WTC11 (cell line): ENCODE measurements at regions of chr1 and their contacts with region 1.

Region 1: DNA sequence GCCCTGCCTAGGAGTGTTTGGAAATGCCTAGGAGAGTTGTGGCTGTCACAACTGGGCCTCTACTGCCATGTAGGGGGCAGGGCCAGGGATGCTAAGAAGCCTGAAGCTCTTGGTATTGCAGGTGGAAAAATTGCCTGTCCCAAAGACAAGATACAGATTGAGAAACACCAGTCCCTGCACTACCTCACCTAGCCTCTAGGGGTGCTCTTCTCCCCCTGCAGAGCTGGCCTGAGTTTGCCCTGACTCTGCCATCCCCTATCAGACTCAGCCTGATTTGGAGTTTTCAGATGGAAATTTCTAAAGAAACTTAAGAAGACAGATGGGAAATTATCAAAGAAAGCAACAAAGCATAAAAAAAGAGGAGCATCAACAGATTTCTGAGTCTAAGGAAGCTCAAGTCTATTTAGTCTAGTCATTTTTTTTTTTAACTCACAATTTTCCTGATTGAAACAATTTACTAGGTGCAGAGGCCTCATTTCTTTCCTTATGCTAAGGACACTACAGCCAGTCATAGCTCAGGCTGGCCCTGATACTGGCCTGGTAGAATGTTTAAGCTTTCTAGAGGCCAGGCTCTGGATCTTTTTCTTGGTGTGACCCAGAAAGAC is 61.4 kb upstream of the LRRN2 start:
- DNase-seq: peak; percentile 68
- ATAC-seq: peak; percentile 87
- H3K4me3 Mint-ChIP-seq: no peak overlapping the region
- H3K27ac Mint-ChIP-seq: no peak overlapping the region
- H3K4me1 Mint-ChIP-seq: peaks cover 29% of the 10 kb centered on the region
- H3K27me3 Mint-ChIP-seq: peaks cover 12% of the 10 kb centered on the region; the same call in 1 of the 2 replicates
- CTCF ChIP-seq: peak; percentile 99

Region 2: GRCh38 chr1:204565617-204566582 is 181.0 kb before region 1 on chr1:
- CTCF ChIA-PET with region 1: interaction called, 18 read pairs
- POLR2A ChIA-PET with region 1: interaction called, 3 read pairs
- DNase-seq: peak; percentile 40
- ATAC-seq: peak; percentile 85
- H3K4me3 Mint-ChIP-seq: peak overlapping the region; percentile 53
- H3K27ac Mint-ChIP-seq: peak overlapping the region; percentile 71
- H3K4me1 Mint-ChIP-seq: peaks cover 54% of the 10 kb centered on the region
- H3K27me3 Mint-ChIP-seq: peaks cover 6% of the 10 kb centered on the region
- CTCF ChIP-seq: peak; percentile 68

Region 3: DNA sequence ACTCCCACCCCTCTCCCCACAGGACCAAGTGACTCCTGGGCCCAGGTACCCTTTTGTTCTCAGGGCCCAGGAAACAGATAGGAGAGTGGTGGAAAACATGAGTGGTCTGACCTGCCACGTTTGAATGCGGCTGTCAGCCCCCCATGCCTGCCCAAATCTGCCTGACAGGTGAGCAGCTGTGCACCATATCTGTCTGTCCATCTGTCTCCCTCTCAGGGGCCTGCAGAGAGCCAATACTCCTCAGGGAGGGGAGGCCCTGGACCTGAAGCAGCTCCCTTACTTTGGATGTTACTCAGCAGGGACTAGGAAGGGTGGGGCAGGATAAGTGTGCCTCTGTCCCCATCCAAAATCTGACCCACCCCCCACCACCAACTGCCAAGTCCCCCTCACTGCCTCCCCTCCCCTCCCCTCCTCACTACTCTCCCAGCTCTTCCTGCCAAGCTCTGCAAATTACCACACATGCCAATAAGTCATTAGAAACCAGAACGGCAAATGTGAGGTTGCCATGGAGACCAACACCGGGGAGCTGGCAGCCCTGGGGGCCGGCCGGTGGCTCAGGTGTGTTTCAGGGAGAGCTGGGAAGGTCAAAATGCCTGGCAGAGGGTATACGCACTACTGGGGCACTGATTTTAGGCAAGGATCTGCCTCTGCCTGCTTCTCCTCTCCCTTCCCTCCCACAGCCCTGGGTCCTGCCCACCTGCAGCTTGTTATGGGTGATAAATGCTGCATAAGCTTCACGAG is 72.9 kb before region 1 on chr1:
- CTCF ChIA-PET with region 1: interaction called, 15 read pairs
- POLR2A ChIA-PET with region 1: no interaction called
- DNase-seq: peak; percentile 37
- ATAC-seq: peak; percentile 50
- H3K4me3 Mint-ChIP-seq: no peak overlapping the region
- H3K27ac Mint-ChIP-seq: no peak overlapping the region
- H3K4me1 Mint-ChIP-seq: peaks cover 8% of the 10 kb centered on the region
- H3K27me3 Mint-ChIP-seq: no peaks in the 10 kb centered on the region
- CTCF ChIP-seq: no peak

Region 4: DNA sequence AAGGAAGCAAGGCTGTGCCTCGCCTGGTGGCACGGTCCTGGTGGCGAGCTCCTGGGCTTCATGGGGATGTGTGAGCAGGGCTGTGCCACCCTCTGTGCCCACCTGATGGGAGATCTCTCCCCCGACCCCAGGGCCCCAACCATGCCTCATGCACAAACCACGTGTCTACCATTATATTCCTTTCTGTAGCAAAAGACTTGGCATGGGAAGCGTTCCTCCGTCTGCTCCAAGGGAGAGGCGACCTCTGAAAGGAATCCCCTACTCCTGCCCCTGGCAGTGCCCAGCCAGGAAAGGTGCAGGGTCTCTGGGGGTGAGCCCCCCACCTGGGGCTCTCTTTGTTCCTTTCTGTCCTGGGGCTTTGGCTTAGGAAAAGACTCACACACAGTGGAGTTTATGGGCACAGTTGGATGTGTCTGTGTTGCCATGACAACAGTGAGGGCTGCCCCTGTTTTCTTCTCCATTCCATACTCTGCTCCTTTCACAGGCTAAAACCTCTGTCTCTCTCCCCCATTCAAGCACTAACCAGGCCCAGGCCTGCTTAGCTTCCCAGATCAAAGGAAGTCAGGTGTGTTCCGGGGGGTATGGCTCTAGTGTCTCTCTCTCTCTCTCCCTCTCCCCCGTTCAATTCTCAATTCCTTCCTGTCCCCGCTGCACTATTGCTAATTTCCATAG is 40.0 kb before region 1 on chr1:
- CTCF ChIA-PET with region 1: interaction called, 58 read pairs
- POLR2A ChIA-PET with region 1: no interaction called
- DNase-seq: peak; percentile 52
- ATAC-seq: peak; percentile 20
- H3K4me3 Mint-ChIP-seq: 0 out of 2 replicates have a peak overlapping the region, but pooled peaks have one; percentile 4
- H3K27ac Mint-ChIP-seq: no peak overlapping the region
- H3K4me1 Mint-ChIP-seq: peaks cover 63% of the 10 kb centered on the region
- H3K27me3 Mint-ChIP-seq: peaks cover 93% of the 10 kb centered on the region
- CTCF ChIP-seq: no peak

Region 5: DNA sequence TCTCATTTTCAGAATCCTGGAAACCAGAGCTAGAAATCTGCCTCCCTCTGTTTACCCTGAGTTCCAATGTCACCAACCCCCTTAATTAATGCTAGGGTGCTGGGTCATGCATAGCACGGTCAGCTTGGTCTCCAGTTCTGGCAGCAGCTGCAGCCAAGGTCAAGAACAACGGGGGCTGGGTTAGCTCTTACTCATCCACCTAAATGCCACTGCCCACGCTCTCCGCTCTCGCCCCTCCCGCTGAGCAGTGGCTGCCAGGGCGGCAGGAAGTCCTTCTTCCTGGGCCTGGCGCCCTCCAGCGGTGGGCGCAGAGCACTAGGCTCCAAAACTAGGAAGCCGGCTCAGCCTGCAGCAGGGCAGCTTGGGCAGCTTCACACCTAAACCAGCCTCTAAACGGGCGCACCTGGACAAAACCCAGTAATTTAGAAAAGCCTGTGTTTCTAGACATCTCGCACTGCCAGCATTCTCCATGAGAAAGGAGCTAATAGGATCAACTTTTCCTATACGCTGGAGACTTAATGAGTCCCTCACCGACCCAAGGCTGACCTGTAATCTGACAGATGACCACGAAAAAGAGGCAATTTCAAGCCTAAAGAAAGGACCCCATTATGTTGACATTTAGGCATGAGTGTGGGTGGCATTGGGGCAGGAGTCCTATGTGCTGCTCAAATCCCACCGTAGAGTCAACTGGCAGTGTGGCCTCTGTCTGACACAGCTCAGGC is 16.9 kb after region 1 on chr1:
- CTCF ChIA-PET with region 1: interaction called, 75 read pairs
- POLR2A ChIA-PET with region 1: no interaction called
- DNase-seq: peak; percentile 85
- ATAC-seq: peak; percentile 98
- H3K4me3 Mint-ChIP-seq: peak overlapping the region; percentile 54
- H3K27ac Mint-ChIP-seq: no peak overlapping the region
- H3K4me1 Mint-ChIP-seq: peaks cover 16% of the 10 kb centered on the region
- H3K27me3 Mint-ChIP-seq: peaks cover 47% of the 10 kb centered on the region
- CTCF ChIP-seq: peak; percentile 67

Region 6: DNA sequence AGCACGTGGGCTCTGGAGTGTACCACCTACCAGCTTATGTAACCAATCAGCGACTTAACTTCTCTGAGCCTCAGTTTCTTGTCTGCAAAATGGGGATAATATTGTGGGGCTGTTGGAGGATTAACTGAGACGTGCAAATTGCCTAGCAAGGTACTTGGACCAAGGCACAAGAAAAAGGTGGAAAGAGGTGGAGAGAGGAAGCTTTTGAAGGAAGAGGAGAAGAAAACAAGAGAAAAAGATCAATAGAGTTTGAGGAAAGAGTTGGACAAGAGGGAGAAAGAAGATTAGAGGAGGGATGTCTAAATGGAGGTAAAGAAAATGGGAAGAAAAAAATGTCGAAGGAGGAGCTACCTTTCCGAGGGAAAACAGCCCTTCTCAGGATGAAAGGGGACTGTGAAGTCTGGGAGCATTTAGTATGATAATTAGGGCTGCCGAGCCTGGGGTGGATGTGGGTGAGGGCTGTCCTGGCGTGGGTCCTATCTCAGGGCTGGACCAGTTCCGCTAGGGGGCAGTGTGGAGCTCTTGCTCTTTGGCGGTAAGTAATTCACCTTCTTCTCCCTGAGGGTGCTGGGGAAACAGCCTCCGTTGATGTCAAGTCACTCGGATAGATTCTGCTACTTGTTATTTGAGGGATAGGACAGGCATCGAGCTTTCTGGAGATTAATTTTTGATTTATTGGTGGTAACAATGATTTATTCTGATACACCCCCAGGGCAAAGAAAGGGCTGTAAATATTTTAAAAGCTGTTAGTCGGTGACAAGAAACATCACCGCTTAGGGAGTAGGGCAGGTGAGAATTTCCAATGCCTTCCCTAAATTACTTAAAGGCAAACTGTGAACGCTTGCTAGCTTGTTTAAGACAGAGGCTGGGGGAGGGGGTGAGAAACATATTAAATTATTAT is 44.8 kb after region 1 on chr1:
- CTCF ChIA-PET with region 1: interaction called, 16 read pairs
- POLR2A ChIA-PET with region 1: no interaction called
- DNase-seq: peak; percentile 95
- ATAC-seq: peak; percentile 96
- H3K4me3 Mint-ChIP-seq: no peak overlapping the region
- H3K27ac Mint-ChIP-seq: no peak overlapping the region
- H3K4me1 Mint-ChIP-seq: peaks cover 12% of the 10 kb centered on the region
- H3K27me3 Mint-ChIP-seq: peaks cover 11% of the 10 kb centered on the region
- CTCF ChIP-seq: peak; percentile 90

Region 7: DNA sequence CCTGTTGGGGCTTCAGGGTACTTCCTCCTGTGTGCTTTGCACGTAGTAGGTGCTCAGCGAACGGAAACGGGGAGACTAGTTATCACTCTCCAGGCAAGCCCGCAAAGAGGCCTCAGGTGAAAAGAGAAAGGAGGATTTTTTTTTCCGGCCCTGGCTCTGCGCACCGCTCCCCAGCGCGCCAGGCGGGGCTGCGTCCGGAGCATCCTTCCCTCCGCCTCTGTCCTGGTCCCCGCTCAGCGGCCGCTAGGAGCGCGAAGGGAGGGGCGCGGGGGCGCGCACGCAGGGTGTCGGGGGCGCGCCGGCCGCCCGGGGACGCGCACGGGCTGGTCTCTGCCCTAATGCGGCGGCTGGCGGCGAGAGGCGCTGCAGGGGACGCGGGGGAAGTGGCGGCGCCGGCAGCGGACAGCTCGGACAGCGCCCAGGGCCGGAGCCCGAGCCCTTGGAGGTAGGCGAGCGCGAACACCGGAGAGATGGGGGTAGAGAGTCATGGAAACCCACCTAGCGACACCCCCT is 81.5 kb after region 1 on chr1:
- CTCF ChIA-PET with region 1: no interaction called
- POLR2A ChIA-PET with region 1: no interaction called
- DNase-seq: peak; percentile 88
- ATAC-seq: peak; percentile 82
- H3K4me3 Mint-ChIP-seq: peak overlapping the region; percentile 73
- H3K27ac Mint-ChIP-seq: no peak overlapping the region
- H3K4me1 Mint-ChIP-seq: peaks cover 34% of the 10 kb centered on the region
- H3K27me3 Mint-ChIP-seq: peaks cover 22% of the 10 kb centered on the region
- CTCF ChIP-seq: no peak